Uterus (tissue), 4 donors: ENCODE measurements at regions of chr4 and their contacts with region 1.

Region 1: GRCh38 chr4:142211424-142211823 is 575.0 kb downstream of the IL15 start:
- DNase-seq: no peak
- H3K4me3 ChIP-seq: no peak overlapping the region
- H3K27ac ChIP-seq: no peak overlapping the region
- H3K4me1 ChIP-seq: no peaks in the 10 kb centered on the region
- H3K27me3 ChIP-seq: no peaks in the 10 kb centered on the region
- CTCF ChIP-seq: no peak
- POLR2A ChIP-seq: no peak

Region 2: GRCh38 chr4:142191901-142192300 is 19.5 kb before region 1 on chr4:
- intact Hi-C with region 1: loop called (anchors 2 kb)
- DNase-seq: no peak
- H3K4me3 ChIP-seq: no peak overlapping the region
- H3K27ac ChIP-seq: no peak overlapping the region
- H3K4me1 ChIP-seq: no peaks in the 10 kb centered on the region
- H3K27me3 ChIP-seq: no peaks in the 10 kb centered on the region
- CTCF ChIP-seq: no peak
- POLR2A ChIP-seq: no peak